Stomach (tissue), 19 donors: ENCODE measurements at regions of chr21 and their contacts with region 1.

Region 1: DNA sequence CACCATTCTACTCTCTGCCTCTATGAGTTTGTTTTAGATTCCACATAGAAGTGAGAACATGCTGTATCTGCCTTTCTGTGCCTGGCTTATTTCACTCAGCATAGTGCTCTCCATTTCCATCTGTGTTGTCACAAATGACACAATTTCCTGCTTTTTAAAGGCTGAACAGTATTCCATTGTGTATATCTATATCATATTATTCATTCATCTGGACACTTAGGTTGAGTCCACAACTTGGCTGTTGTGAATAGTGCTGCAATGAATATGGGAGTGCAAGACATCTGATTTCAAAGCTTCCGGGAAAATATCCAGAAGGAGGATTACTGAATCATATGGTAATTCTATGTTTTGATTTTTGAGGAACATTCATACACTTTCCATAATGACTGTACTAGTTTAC is 20.1 kb upstream of the DONSON start:
- DNase-seq: peak in 1 of 2 donors; percentile 4
- H3K4me3 ChIP-seq: no peak overlapping the region
- H3K27ac ChIP-seq: peak overlapping the region in 2 of 5 donors; percentile 2 to 33
- H3K4me1 ChIP-seq: no peaks in the 10 kb centered on the region
- H3K27me3 ChIP-seq: no peaks in the 10 kb centered on the region
- CTCF ChIP-seq: no peak
- EP300 ChIP-seq: no peak
- POLR2A ChIP-seq: no peak

Region 2: DNA sequence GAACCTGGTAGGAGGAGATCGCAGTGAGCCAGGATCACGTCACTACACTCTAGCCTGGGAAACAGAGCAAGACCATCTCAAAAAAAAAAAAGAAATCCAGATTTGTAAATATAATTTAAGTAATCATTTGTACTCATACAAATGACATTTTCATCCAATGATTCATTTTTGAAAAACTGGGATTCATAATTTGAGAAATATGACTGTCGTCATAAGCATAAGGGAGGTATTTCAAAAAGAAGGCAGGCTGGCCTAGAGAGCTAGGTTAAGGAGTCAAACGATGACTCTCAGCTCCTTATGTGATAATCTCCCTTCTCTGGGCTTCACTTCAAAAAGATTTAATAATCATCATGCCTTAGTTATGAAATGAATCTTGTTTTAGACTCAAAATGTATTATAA is 68.9 kb before region 1 on chr21:
- intact Hi-C with region 1: loop called (anchors 10 kb)
- DNase-seq: no peak
- H3K4me3 ChIP-seq: no peak overlapping the region
- H3K27ac ChIP-seq: no peak overlapping the region
- H3K4me1 ChIP-seq: peaks cover 15 to 45% (median 26%) of the 10 kb centered on the region in 4 donors
- H3K27me3 ChIP-seq: no peaks in the 10 kb centered on the region
- CTCF ChIP-seq: no peak
- EP300 ChIP-seq: no peak
- POLR2A ChIP-seq: no peak

Region 3: DNA sequence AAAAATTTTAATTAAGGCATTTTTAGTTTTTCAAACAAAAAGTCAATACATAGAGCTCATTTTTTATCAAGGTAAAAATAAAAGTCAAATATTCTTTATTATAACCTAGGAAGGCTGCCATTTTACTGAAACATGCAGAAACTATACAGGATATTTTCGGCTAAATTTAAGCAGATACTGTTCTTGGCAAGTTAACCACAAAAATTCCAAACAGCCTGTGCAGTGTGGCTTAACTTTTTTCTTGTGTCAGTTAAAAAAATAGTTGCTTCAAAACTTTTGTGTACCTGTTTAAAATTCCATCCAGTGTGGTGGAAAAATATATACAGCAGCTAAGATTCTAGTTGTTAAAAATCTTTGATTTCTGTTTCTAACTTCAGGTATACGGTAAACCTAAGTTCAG is 172.1 kb after region 1 on chr21:
- intact Hi-C with region 1: no loop called
- DNase-seq: no peak
- H3K4me3 ChIP-seq: no peak overlapping the region
- H3K27ac ChIP-seq: no peak overlapping the region
- H3K4me1 ChIP-seq: no peaks in the 10 kb centered on the region
- H3K27me3 ChIP-seq: no peaks in the 10 kb centered on the region
- CTCF ChIP-seq: no peak
- EP300 ChIP-seq: no peak
- POLR2A ChIP-seq: no peak

Region 4: GRCh38 chr21:33894736-33895288 is 286.3 kb after region 1 on chr21:
- intact Hi-C with region 1: no loop called
- DNase-seq: peak; percentile 57 to 94
- H3K4me3 ChIP-seq: peak overlapping the region; percentile 23 to 39 (median 28)
- H3K27ac ChIP-seq: no peak overlapping the region
- H3K4me1 ChIP-seq: peaks cover 0 to 18% (median 9%) of the 10 kb centered on the region in 4 donors
- H3K27me3 ChIP-seq: no peaks in the 10 kb centered on the region
- CTCF ChIP-seq: peak in 5 of 7 experiments; percentile 43 to 62 (median 46)
- EP300 ChIP-seq: no peak
- POLR2A ChIP-seq: no peak